GM12878 (cell line): ENCODE measurements at regions of chr6 and their contacts with region 1.

Region 1: DNA sequence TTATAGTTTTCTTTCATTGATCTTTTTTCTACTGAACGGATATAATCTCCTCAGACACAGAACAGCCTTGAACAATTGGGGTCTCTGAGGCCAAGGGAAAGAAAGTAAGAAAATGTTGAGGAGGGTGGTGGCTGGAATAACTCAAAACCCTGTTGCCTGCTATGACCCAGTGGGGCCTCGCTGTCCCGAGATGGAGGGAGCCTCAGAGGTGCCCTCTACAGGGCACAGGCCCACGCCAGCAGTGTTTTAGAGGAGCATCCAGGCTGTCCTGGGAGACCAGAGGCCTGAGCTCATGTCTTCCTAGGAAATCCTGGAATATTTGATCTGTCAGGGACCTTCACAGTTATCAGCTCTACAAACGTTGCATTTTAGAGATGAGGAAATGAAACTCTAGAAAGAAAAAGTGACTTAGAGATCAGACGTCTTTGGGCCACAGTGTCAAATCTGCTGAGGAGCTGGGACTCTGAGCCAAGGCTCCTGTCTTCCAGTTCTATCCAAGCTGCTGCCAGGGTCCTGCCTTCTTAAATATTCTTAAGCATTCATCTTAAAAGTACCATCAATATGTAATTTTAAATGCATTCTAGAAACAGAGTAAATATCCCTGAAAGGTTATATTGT is 26.3 kb downstream of the ALDH5A1 start:
- DNase-seq: no peak
- ATAC-seq: peak; percentile 76
- H3K4me3 ChIP-seq: no peak overlapping the region
- H3K27ac ChIP-seq: peak overlapping the region; percentile 15; the same call in 1 of the 2 replicates
- H3K4me1 ChIP-seq: peaks cover 28% of the 10 kb centered on the region
- H3K27me3 ChIP-seq: no peaks in the 10 kb centered on the region
- CTCF ChIP-seq: peak; percentile 76 to 87 (median 78)
- EP300 ChIP-seq: no peak
- POLR2A ChIP-seq: no peak
- RAD21 ChIP-seq: peak; percentile 50

Region 2: GRCh38 chr6:24064082-24064481 is 457.0 kb before region 1 on chr6:
- CTCF ChIA-PET with region 1: interaction called, 3 read pairs
- POLR2A ChIA-PET with region 1: no interaction called
- RAD21 ChIA-PET with region 1: no interaction called
- SMC1A ChIA-PET with region 1: no interaction called
- in situ Hi-C with region 1: no loop called
- intact Hi-C with region 1: loop called (anchors 5 kb)
- DNase-seq: no peak
- ATAC-seq: peak; percentile 38; the same call in 2 of the 3 replicates
- H3K4me3 ChIP-seq: no peak overlapping the region
- H3K27ac ChIP-seq: no peak overlapping the region
- H3K4me1 ChIP-seq: peaks cover 5% of the 10 kb centered on the region; the same call in 1 of the 2 replicates
- H3K27me3 ChIP-seq: no peaks in the 10 kb centered on the region
- CTCF ChIP-seq: peak; percentile 40 to 59 (median 41); a peak in 5 of 6 replicates
- EP300 ChIP-seq: no peak
- POLR2A ChIP-seq: no peak
- RAD21 ChIP-seq: peak; percentile 85

Region 3: DNA sequence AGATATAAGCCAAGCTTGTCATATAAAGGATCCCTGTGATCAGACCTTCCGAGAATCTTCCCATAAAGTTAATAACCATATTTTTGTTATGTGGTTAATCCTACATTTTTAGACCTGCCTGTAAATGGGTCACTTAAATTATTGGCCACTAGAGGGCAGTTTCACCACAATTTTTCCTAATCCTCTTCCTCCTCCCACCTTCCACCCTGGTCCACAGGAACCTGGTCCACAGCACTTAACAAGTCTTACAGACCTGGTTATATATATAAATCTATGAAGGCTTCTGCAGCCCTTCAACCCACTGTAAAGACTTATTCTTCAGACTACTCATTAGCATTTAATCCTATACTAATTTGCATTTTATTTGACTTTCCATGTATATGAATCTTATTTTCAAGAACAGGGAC is 90.0 kb before region 1 on chr6:
- CTCF ChIA-PET with region 1: interaction called, 18 read pairs
- POLR2A ChIA-PET with region 1: interaction called, 5 read pairs
- RAD21 ChIA-PET with region 1: interaction called, 9 read pairs
- SMC1A ChIA-PET with region 1: interaction called, 17 read pairs
- in situ Hi-C with region 1: no loop called
- intact Hi-C with region 1: loop called (anchors 5 kb)
- DNase-seq: no peak
- ATAC-seq: peak; percentile 54; the same call in 1 of the 3 replicates
- H3K4me3 ChIP-seq: no peak overlapping the region
- H3K27ac ChIP-seq: no peak overlapping the region
- H3K4me1 ChIP-seq: no peaks in the 10 kb centered on the region
- H3K27me3 ChIP-seq: no peaks in the 10 kb centered on the region
- CTCF ChIP-seq: peak; percentile 41 to 59 (median 44); a peak in 5 of 6 replicates
- EP300 ChIP-seq: no peak
- POLR2A ChIP-seq: no peak
- RAD21 ChIP-seq: peak; percentile 58

Region 4: DNA sequence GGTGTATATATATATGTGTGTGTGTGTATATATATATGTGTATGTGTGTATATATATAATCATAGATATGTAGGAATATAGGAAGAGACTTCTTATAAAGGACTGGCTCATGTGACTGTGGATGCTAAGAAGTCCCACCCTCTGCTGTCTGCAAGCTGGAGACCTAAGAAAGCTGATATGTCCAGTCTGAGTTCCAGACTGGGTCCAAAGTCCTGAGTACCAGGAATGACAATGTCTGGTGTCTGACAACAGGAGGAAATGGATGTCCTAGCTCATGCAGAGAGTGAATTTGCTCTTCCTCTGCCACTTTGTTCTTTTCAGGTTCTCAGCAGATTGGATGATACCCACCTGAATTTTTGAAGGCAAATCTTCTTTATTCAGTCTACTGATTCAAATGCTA is 19.1 kb before region 1 on chr6:
- CTCF ChIA-PET with region 1: interaction called, 233 read pairs
- POLR2A ChIA-PET with region 1: interaction called, 5 read pairs
- RAD21 ChIA-PET with region 1: interaction called, 81 read pairs
- SMC1A ChIA-PET with region 1: interaction called, 68 read pairs
- in situ Hi-C with region 1: no loop called
- intact Hi-C with region 1: no loop called
- DNase-seq: no peak
- ATAC-seq: no peak
- H3K4me3 ChIP-seq: no peak overlapping the region
- H3K27ac ChIP-seq: no peak overlapping the region
- H3K4me1 ChIP-seq: no peaks in the 10 kb centered on the region
- H3K27me3 ChIP-seq: no peaks in the 10 kb centered on the region
- CTCF ChIP-seq: no peak
- EP300 ChIP-seq: no peak
- POLR2A ChIP-seq: no peak
- RAD21 ChIP-seq: no peak

Region 5: DNA sequence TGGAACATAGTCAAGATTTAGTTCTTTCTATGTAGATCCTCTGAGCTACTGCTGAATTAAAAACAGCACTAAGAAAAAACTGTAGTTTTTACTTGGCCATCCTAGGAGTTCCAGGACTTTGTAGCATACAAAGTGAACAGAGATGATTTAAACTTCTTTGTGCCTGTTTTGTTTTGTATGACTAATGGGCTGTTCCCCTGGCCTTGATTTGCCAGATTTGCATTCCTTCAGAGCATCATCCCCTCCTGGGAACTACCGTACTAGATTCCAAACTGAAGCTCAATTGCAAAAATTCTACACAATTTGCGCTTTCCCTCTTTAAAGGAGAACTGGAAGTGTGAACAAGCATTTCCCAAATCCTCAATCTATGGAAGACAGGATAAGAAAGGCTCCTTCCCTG is 168.9 kb after region 1 on chr6:
- CTCF ChIA-PET with region 1: interaction called, 12 read pairs
- POLR2A ChIA-PET with region 1: no interaction called
- RAD21 ChIA-PET with region 1: no interaction called
- SMC1A ChIA-PET with region 1: interaction called, 5 read pairs
- in situ Hi-C with region 1: loop called (anchors 5 kb)
- intact Hi-C with region 1: loop called (anchors 2 kb)
- DNase-seq: no peak
- ATAC-seq: no peak
- H3K4me3 ChIP-seq: no peak overlapping the region
- H3K27ac ChIP-seq: no peak overlapping the region
- H3K4me1 ChIP-seq: no peaks in the 10 kb centered on the region; the same call in 1 of the 2 replicates
- H3K27me3 ChIP-seq: no peaks in the 10 kb centered on the region
- CTCF ChIP-seq: no peak
- EP300 ChIP-seq: no peak
- POLR2A ChIP-seq: no peak
- RAD21 ChIP-seq: no peak

Region 6: GRCh38 chr6:24766680-24767462 is 245.8 kb after region 1 on chr6:
- CTCF ChIA-PET with region 1: interaction called, 7 read pairs
- POLR2A ChIA-PET with region 1: no interaction called
- RAD21 ChIA-PET with region 1: interaction called, 7 read pairs
- SMC1A ChIA-PET with region 1: interaction called, 12 read pairs
- in situ Hi-C with region 1: no loop called
- intact Hi-C with region 1: no loop called
- DNase-seq: no peak
- ATAC-seq: peak; percentile 86
- H3K4me3 ChIP-seq: no peak overlapping the region
- H3K27ac ChIP-seq: no peak overlapping the region
- H3K4me1 ChIP-seq: no peaks in the 10 kb centered on the region
- H3K27me3 ChIP-seq: no peaks in the 10 kb centered on the region
- CTCF ChIP-seq: peak; percentile 24 to 68 (median 45); a peak in 3 of 6 replicates
- EP300 ChIP-seq: no peak
- POLR2A ChIP-seq: no peak
- RAD21 ChIP-seq: peak; percentile 75

Region 7: DNA sequence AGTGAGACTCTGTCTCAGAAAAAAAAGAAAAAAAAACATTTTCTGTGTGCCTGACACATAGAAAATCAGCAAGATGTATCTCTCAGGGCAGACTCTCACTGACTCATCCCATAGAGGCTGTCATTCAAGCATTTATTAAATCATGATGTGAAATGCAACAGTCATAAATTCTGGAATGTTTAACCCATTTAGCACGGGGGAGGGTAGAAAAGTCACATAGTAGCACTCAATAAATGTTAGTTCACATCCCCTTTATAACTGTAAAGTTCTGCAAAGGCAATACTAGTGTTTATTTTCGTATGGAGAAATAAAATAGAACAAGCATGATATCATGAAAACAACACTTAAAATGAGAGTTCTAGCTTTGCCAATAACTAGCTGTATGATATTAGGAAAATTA is 742.6 kb after region 1 on chr6:
- CTCF ChIA-PET with region 1: no interaction called
- POLR2A ChIA-PET with region 1: no interaction called
- RAD21 ChIA-PET with region 1: no interaction called
- SMC1A ChIA-PET with region 1: no interaction called
- in situ Hi-C with region 1: no loop called
- intact Hi-C with region 1: no loop called
- DNase-seq: no peak
- ATAC-seq: no peak
- H3K4me3 ChIP-seq: no peak overlapping the region
- H3K27ac ChIP-seq: no peak overlapping the region
- H3K4me1 ChIP-seq: no peaks in the 10 kb centered on the region
- H3K27me3 ChIP-seq: peaks cover 0 to 3% of the 10 kb centered on the region in 2 experiments; a peak in 1 of 4 replicates
- CTCF ChIP-seq: no peak
- EP300 ChIP-seq: no peak
- POLR2A ChIP-seq: no peak
- RAD21 ChIP-seq: no peak